ENCODE measurements at regions of chr17 and their contacts with region 1.

Region 1: GRCh38 chr17:64129764-64130558 is at the start of gene ERN1:
- DNase-seq: peak; percentile 89
- ATAC-seq: peak; percentile 89
- H3K4me3 Mint-ChIP-seq: peak within 1 kb of the TSS; percentile 66
- H3K27ac Mint-ChIP-seq: no peak within 1 kb of the TSS
- H3K4me1 Mint-ChIP-seq: peaks cover 13% of the 10 kb centered on the region
- H3K27me3 Mint-ChIP-seq: peaks cover 37% of the 10 kb centered on the region
- CTCF ChIP-seq: no peak
- total RNA-seq, gene ERN1: 6.5 to 8.6 TPM (median 7.6 TPM) in 3 replicates

Region 2: GRCh38 chr17:63931099-63931561 is 198.8 kb before region 1 on chr17:
- CTCF ChIA-PET with region 1: interaction called, 14 read pairs
- POLR2A ChIA-PET with region 1: no interaction called
- DNase-seq: peak; percentile 58
- ATAC-seq: peak; percentile 86
- H3K4me3 Mint-ChIP-seq: no peak overlapping the region
- H3K27ac Mint-ChIP-seq: no peak overlapping the region
- H3K4me1 Mint-ChIP-seq: peaks cover 18% of the 10 kb centered on the region
- H3K27me3 Mint-ChIP-seq: no peaks in the 10 kb centered on the region; the same call in 1 of the 2 replicates
- CTCF ChIP-seq: no peak

Region 3: DNA sequence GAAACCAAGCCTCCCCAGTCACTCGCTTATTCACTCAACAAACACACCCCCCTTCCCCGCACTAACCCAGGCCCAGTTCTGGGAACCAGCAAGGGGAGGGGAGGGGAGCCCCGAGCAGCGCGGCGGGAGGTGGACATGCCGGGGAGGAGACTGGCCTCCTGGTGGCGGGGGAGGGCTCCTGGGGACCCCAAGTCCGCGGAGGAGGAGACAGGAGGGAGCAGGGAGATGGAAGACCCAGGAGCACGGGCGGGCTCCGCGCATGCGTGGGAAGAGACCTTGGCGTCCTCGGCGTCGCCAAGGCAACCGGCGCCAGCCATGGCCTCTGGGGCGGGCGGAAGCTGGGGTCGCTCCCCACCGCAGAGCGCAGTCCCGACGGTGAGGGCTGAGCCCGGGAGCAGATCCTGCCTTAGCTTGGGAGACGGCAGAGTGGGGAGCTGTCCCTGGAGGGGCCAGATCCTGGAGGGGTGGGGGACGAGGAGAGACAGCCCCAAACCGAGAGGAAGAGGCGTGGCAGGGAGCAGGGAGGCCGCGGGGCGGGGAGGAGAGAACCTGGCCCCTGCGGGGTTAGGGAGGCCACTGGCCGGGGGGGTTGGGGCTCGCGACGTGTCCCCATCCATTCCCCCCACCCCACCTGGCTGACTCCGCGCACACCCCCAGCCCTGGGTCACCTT is 131.8 kb before region 1 on chr17 and contains the start of gene PRR29:
- CTCF ChIA-PET with region 1: interaction called, 10 read pairs
- POLR2A ChIA-PET with region 1: interaction called, 3 read pairs
- DNase-seq: peak; percentile 82
- ATAC-seq: peak; percentile 78
- H3K4me3 Mint-ChIP-seq: peak within 1 kb of the TSS; percentile 86
- H3K27ac Mint-ChIP-seq: no peak within 1 kb of the TSS
- H3K4me1 Mint-ChIP-seq: peaks cover 16% of the 10 kb centered on the region
- H3K27me3 Mint-ChIP-seq: peaks cover 40% of the 10 kb centered on the region
- CTCF ChIP-seq: no peak
- total RNA-seq, gene PRR29: 0.64 to 1.1 TPM (median 0.85 TPM) in 3 replicates

Region 4: GRCh38 chr17:64036198-64036922 is 93.6 kb before region 1 on chr17:
- CTCF ChIA-PET with region 1: interaction called, 380 read pairs
- POLR2A ChIA-PET with region 1: no interaction called
- DNase-seq: peak; percentile 60
- ATAC-seq: peak; percentile 99
- H3K4me3 Mint-ChIP-seq: no peak overlapping the region
- H3K27ac Mint-ChIP-seq: no peak overlapping the region
- H3K4me1 Mint-ChIP-seq: 0 out of 2 replicates have a peak, but pooled peaks cover 3% of the 10 kb centered on the region
- H3K27me3 Mint-ChIP-seq: no peaks in the 10 kb centered on the region
- CTCF ChIP-seq: no peak

Region 5: GRCh38 chr17:64056269-64057005 is 73.5 kb before region 1 on chr17:
- CTCF ChIA-PET with region 1: interaction called, 364 read pairs
- POLR2A ChIA-PET with region 1: interaction called, 4 read pairs
- DNase-seq: peak; percentile 63
- ATAC-seq: peak; percentile 99
- H3K4me3 Mint-ChIP-seq: no peak overlapping the region
- H3K27ac Mint-ChIP-seq: peak overlapping the region; percentile 69; the same call in 1 of the 2 replicates
- H3K4me1 Mint-ChIP-seq: peaks cover 21% of the 10 kb centered on the region
- H3K27me3 Mint-ChIP-seq: no peaks in the 10 kb centered on the region
- CTCF ChIP-seq: no peak

Region 6: GRCh38 chr17:64178011-64178825 is 48.3 kb after region 1 on chr17:
- CTCF ChIA-PET with region 1: no interaction called
- POLR2A ChIA-PET with region 1: no interaction called
- DNase-seq: no peak
- ATAC-seq: no peak
- H3K4me3 Mint-ChIP-seq: no peak overlapping the region
- H3K27ac Mint-ChIP-seq: no peak overlapping the region
- H3K4me1 Mint-ChIP-seq: no peaks in the 10 kb centered on the region
- H3K27me3 Mint-ChIP-seq: no peaks in the 10 kb centered on the region
- CTCF ChIP-seq: no peak

Region 7: DNA sequence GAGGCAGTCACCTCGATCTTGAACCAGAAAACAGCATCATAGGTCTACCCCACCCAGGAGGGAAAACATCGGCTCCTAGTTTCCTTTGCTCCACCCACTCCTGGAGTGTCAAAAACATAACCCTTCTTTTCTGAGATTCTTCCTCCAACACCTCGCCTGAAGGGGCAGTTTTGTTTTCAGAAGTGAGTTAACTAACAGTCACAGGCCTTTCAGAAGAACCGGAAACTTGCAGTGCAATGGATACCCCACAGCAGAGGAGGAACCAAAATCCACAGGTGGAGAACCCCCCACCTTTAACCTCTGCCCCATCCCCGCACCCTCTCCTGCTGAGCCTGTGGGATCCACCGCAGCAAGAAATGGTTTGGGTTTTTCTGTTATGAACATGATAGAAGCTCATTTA is 140.9 kb after region 1 on chr17:
- CTCF ChIA-PET with region 1: no interaction called
- POLR2A ChIA-PET with region 1: no interaction called
- DNase-seq: no peak
- ATAC-seq: no peak
- H3K4me3 Mint-ChIP-seq: no peak overlapping the region
- H3K27ac Mint-ChIP-seq: no peak overlapping the region
- H3K4me1 Mint-ChIP-seq: peaks cover 7% of the 10 kb centered on the region
- H3K27me3 Mint-ChIP-seq: peaks cover 13% of the 10 kb centered on the region
- CTCF ChIP-seq: no peak

Region 8: DNA sequence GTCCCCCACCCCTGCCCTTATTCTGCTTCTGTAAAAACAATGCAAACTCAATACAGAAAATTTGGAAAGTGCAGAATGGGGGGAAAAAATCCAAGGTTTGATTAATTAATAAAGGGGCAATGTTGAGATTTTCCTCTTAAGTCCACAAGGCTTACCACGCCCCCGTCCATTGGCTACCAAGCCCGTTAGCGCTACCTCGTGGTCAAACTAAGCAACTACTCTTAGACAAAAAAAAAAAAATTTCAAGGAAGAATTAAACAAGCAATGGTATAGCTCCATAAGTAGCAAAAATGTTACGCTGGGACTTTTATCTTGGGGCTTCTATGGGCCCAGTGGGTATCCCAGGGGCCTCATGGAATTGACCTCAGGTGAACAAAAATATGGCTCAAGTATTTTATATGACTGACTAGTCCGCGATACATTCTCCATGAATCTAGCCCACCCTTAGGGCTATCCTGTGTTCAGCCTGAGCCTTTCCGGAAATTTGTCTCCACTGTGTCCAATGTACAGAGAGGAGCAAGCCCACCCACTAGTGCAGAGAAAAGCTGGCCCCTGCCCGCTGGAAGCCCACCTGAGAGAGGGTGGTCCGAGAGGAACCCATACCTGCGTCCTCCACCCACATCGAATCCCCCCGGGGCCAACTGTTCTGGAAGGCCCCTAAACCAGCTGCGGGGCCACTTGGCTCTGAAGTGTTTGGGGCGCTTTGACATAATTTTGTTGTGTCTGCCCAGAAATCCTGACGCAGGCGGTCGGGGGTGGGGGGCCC is 152.2 kb after region 1 on chr17:
- CTCF ChIA-PET with region 1: interaction called, 12 read pairs
- POLR2A ChIA-PET with region 1: interaction called, 3 read pairs
- DNase-seq: peak; percentile 49
- ATAC-seq: peak; percentile 71
- H3K4me3 Mint-ChIP-seq: no peak overlapping the region
- H3K27ac Mint-ChIP-seq: no peak overlapping the region
- H3K4me1 Mint-ChIP-seq: no peaks in the 10 kb centered on the region; the same call in 1 of the 2 replicates
- H3K27me3 Mint-ChIP-seq: no peaks in the 10 kb centered on the region
- CTCF ChIP-seq: peak; percentile 55